ENCODE measurements at regions of chr1 and their contacts with region 1.

Region 1: DNA sequence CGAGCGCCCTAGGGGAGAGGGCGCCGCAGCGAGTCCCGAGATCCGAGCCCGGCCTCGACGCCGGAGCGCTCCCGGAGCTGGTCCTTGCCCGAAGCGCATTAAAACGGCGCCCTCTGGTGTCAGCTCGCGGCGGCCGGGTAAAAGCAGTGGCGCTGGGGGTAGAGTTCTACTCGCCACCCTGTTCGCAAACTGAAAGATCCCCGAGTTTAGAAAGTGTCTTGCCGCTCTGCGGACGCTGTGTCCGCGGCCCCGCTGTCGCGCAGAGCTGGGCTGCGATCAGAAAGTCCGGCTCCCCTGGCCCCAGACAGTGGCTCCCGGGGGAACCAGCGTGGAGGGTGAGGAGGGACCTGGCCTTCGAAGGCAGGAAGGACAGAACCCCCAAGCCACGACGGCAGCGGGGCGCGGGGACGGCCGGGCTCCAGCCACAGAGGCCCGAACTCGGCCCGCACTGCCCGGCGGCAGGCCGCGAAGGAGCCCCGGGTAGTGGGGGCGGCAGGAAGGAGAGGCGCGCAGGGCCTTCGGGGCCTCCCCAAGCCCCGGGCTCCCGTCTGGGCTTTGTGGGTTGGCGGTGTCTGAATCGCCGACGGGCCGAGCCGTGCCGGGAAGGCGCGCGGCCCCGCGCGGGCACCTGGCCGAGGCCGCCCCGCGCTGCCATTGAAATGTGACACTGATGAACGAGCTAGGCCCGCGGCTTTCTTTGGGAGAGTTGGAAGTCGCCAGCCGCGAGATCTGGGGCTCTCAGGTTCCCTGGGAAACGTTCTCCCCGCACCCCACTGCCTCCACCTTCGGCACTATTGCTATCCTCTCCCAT is 39.1 kb upstream of the NFIA start:
- DNase-seq: peak in 1 of 2 experiments; percentile 99
- H3K4me3 ChIP-seq: peak overlapping the region; percentile 33 to 66 (median 40)
- H3K27ac ChIP-seq: no peak overlapping the region
- H3K4me1 ChIP-seq: peaks cover 0 to 5% (median 2%) of the 10 kb centered on the region in 4 experiments; a peak in 5 of 7 replicates
- H3K27me3 ChIP-seq: peaks cover 0 to 24% (median 19%) of the 10 kb centered on the region in 4 experiments; a peak in 6 of 7 replicates
- CTCF ChIP-seq: peak; percentile 83 to 94 (median 90)
- EP300 ChIP-seq: no peak
- POLR2A ChIP-seq: peak in 1 of 2 experiments; percentile 39; a peak in 1 of 3 replicates
- RAD21 ChIP-seq: peak; percentile 92 to 94

Region 2: GRCh38 chr1:60281360-60281932 is 761.8 kb before region 1 on chr1:
- CTCF ChIA-PET with region 1: interaction called, 11 read pairs
- POLR2A ChIA-PET with region 1: no interaction called
- DNase-seq: peak; percentile 59 to 61
- H3K4me3 ChIP-seq: no peak overlapping the region
- H3K27ac ChIP-seq: no peak overlapping the region
- H3K4me1 ChIP-seq: peaks cover 0 to 5% (median 0%) of the 10 kb centered on the region in 4 experiments; a peak in 2 of 7 replicates
- H3K27me3 ChIP-seq: no peaks in the 10 kb centered on the region
- CTCF ChIP-seq: peak; percentile 78 to 95 (median 82)
- EP300 ChIP-seq: no peak
- POLR2A ChIP-seq: no peak
- RAD21 ChIP-seq: peak; percentile 97 to 98

Region 3: DNA sequence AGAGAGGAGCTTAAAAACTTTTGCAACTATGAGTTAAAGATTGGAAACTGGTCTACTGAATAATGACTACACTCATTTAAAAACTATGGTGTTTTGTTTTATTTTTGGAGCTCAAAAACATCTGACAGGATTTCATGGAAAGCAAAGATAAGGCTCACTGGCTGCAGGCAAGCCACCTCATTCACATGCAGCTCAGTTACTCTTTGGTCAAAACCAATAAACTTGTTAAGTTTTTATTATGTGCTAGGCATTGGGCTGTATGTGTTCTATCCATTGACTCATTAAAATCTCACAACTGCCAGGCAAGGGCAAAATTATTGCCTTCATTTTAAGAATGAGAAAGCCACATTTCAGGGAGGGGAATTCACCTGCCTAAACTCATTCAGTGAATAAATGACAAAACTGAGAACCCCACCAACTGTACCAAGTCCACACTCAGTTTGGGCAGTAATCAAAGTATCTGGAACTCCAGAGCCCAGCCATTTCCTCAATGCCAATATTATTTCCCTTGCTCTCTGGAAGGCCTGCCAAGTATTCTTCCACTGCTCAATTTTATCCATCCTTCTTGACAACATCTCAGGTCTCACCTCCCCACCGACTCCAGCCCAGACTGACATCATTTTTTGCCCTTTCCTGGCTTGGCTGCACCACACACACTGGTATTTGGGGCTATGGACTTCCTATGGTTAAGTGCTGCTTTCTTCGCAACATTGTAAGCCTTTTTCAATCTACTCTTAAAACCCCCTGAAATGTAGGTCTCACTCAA is 361.9 kb before region 1 on chr1:
- CTCF ChIA-PET with region 1: no interaction called
- POLR2A ChIA-PET with region 1: no interaction called
- DNase-seq: no peak
- H3K4me3 ChIP-seq: no peak overlapping the region
- H3K27ac ChIP-seq: no peak overlapping the region
- H3K4me1 ChIP-seq: peaks cover 0 to 1% (median 0%) of the 10 kb centered on the region in 4 experiments; a peak in 2 of 7 replicates
- H3K27me3 ChIP-seq: no peaks in the 10 kb centered on the region
- CTCF ChIP-seq: no peak
- EP300 ChIP-seq: no peak
- POLR2A ChIP-seq: no peak
- RAD21 ChIP-seq: no peak

Region 4: DNA sequence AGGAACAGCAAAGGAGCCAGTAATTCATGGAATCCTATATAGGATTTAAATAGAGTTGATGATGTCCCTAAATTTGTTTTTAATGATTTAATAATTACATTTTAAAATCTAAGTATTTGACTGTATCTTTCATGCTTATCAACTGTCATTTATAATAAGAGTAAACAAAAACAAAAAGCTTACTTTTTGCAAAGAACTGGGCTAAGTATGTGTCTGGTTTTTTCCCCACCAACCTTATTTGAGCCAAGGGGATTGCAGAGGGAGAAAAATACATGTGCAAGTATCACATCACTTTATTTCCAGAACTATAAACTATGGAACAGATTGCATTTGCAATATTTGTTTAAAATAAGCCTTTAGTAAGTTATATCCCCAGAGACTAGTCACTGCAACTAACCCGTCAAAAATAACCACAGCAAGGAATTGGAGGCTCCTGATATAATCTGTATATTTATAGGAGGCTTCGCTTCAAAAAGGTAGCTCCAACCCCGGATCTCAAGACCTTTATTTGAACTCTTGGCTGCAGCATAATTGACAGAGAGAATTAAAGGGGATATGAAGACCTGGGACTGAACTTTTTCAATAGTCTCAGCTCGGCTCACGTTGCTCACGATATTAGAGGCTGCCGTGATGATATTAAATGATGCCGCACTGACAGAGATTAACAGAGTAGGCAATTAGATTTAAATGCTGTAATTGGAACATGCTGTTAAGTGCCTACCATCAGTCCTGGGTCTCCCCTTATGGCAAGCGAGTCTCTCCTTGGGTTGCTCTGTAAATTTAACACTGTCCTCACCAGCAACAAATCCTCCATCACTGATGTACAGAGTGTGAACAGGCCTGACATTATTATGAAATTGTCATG is 289.9 kb before region 1 on chr1:
- CTCF ChIA-PET with region 1: no interaction called
- POLR2A ChIA-PET with region 1: no interaction called
- DNase-seq: no peak
- H3K4me3 ChIP-seq: no peak overlapping the region
- H3K27ac ChIP-seq: no peak overlapping the region
- H3K4me1 ChIP-seq: no peaks in the 10 kb centered on the region
- H3K27me3 ChIP-seq: no peaks in the 10 kb centered on the region
- CTCF ChIP-seq: no peak
- EP300 ChIP-seq: no peak
- POLR2A ChIP-seq: no peak
- RAD21 ChIP-seq: no peak

Region 5: GRCh38 chr1:60848583-60849188 is 194.5 kb before region 1 on chr1:
- CTCF ChIA-PET with region 1: interaction called, 42 read pairs
- POLR2A ChIA-PET with region 1: interaction called, 14 read pairs
- DNase-seq: peak; percentile 1 to 59
- H3K4me3 ChIP-seq: peak overlapping the region in 1 of 4 experiments; percentile 28; a peak in 1 of 8 replicates
- H3K27ac ChIP-seq: no peak overlapping the region
- H3K4me1 ChIP-seq: peaks cover 0 to 5% (median 2%) of the 10 kb centered on the region in 4 experiments; a peak in 5 of 7 replicates
- H3K27me3 ChIP-seq: no peaks in the 10 kb centered on the region
- CTCF ChIP-seq: peak in 2 of 3 experiments; percentile 49 to 53; a peak in 2 of 4 replicates
- EP300 ChIP-seq: no peak
- POLR2A ChIP-seq: no peak
- RAD21 ChIP-seq: peak; percentile 74 to 82

Region 6: DNA sequence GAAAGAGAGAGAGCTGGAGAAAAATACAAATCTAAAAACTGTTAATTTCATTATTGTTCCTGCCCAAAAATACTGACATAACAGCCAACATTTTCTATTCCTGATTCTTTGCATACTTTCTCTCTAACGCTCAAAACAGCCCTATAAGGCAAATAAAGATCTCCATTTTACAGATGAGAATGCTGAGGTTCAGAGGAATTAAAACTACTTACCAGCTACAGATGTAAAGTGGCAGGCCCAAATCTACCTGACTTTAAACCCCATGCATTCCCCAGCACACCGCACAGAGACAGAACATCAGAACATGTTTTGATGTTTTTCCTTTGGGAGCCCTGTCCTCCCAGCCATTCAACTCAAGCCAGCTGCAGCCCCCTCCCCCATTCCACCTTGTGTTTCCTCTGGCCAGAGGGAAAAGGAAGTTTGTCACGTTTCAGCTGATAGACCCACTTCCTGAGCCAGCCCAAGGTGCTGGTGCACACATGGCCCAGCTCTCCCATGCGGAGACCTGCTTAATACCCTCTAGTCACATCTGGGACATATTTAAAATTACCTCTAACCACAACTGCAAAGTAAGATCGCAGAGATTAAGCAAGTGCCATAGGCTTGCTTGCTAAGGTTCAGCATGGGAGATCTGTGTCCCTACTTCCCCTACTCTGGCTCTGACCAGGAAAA is 93.9 kb before region 1 on chr1:
- CTCF ChIA-PET with region 1: interaction called, 11 read pairs
- POLR2A ChIA-PET with region 1: no interaction called
- DNase-seq: no peak
- H3K4me3 ChIP-seq: no peak overlapping the region
- H3K27ac ChIP-seq: no peak overlapping the region
- H3K4me1 ChIP-seq: peaks cover 0 to 7% (median 2%) of the 10 kb centered on the region in 4 experiments; a peak in 2 of 7 replicates
- H3K27me3 ChIP-seq: no peaks in the 10 kb centered on the region
- CTCF ChIP-seq: no peak
- EP300 ChIP-seq: no peak
- POLR2A ChIP-seq: no peak
- RAD21 ChIP-seq: no peak

Region 7: GRCh38 chr1:60972841-60973364 is 70.3 kb before region 1 on chr1:
- CTCF ChIA-PET with region 1: interaction called, 29 read pairs
- POLR2A ChIA-PET with region 1: interaction called, 3 read pairs
- DNase-seq: no peak
- H3K4me3 ChIP-seq: no peak overlapping the region
- H3K27ac ChIP-seq: no peak overlapping the region
- H3K4me1 ChIP-seq: peaks cover 0 to 12% (median 8%) of the 10 kb centered on the region in 4 experiments; a peak in 3 of 7 replicates
- H3K27me3 ChIP-seq: peaks cover 0 to 5% (median 0%) of the 10 kb centered on the region in 4 experiments; a peak in 2 of 7 replicates
- CTCF ChIP-seq: no peak
- EP300 ChIP-seq: no peak
- POLR2A ChIP-seq: no peak
- RAD21 ChIP-seq: no peak

Region 8: DNA sequence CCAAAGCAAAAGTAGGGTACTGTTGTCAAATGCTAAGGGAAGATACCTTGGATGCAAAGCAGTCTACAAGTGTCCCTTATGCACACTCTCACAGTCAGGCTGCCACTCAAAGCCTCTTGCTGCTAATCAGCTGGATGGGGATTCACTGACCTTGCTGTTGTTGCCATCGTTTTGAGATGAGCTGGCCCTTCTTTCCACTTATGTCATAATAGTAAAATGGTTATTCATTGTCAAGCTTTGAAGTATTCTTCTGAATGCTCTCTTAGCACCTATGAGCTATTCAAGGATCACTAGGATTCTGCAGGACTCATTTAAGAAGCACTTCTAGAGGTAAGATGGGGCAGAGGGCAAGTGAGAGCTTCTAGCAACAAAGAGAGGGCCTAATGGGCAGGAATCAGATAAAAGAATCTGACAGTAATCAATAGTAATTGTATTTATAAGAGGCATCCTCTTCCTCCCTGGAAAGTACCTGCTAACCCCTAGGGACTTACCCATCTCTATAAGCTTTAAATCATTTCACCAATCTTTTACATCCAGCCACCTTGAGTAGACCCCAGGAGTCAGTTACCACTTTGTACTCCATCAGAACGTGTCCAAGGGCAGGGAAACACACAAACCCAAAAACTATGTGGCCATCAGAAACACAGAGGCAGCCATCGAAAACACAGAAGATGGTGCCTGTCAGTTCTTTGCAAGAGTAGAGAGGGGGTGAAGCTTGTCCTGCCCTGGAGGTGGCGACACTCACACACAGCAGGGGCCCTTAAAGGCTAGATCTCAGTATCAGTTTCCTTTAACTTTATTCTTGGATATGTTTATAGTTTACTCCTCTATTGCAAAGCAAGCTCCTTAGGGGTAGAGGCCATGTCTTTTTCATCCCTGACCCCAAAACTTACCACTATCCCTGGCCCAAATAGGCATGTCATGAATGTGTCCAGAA is 64.5 kb before region 1 on chr1:
- CTCF ChIA-PET with region 1: interaction called, 30 read pairs
- POLR2A ChIA-PET with region 1: interaction called, 3 read pairs
- DNase-seq: peak in 1 of 2 experiments; percentile 55
- H3K4me3 ChIP-seq: no peak overlapping the region
- H3K27ac ChIP-seq: no peak overlapping the region
- H3K4me1 ChIP-seq: peaks cover 0 to 4% (median 2%) of the 10 kb centered on the region in 4 experiments; a peak in 1 of 7 replicates
- H3K27me3 ChIP-seq: no peaks in the 10 kb centered on the region
- CTCF ChIP-seq: peak; percentile 64 to 75 (median 69)
- EP300 ChIP-seq: no peak
- POLR2A ChIP-seq: no peak
- RAD21 ChIP-seq: peak; percentile 71 to 74

Region 9: DNA sequence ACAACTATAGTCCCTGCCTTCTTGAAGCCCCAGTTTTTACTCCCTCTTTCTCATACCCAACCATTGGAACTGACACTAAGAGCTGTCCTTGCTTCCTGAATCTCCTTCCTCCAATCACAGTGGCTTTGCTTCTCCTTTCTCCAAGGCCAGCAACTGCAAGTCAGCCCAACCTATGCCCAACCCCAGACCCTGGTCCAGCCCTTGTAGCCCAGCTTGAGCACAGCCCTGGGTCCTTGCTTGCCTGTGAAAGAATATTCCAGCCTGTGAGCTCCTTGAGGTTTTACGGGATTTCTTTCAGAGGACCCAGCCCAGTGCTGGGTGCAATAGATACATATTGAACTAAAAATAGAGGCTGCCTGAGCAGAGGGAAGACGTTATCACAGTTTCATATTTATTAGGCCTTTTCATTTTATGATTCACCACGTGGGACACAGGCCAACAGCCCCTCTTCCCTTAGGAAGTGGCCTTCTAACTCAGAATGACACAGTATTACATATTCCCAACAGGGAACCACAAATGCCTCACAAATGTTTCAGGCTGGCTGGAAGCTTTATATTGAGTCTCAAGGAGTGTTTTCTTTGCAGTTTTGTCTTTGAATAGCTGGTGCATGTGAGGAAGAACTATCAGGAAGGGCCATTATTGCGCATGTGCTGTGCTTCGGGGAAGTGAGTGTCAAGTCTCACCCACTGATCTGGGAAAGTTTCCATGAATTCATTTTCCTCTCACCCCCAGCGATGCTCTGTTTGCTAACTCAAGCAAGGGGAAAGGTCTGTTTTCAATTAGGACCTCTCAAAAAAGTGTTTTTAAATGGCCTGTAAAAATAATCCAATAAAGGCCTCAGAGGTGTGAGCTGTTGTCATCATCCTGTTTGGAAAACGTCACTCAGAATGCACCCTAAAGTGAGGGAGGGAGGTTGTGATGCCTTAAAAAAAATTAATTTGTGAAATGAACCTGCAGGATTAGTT is 53.2 kb before region 1 on chr1:
- CTCF ChIA-PET with region 1: interaction called, 30 read pairs
- POLR2A ChIA-PET with region 1: no interaction called
- DNase-seq: no peak
- H3K4me3 ChIP-seq: no peak overlapping the region
- H3K27ac ChIP-seq: no peak overlapping the region
- H3K4me1 ChIP-seq: peaks cover 0 to 3% (median 0%) of the 10 kb centered on the region in 4 experiments; a peak in 1 of 7 replicates
- H3K27me3 ChIP-seq: no peaks in the 10 kb centered on the region
- CTCF ChIP-seq: no peak
- EP300 ChIP-seq: no peak
- POLR2A ChIP-seq: no peak
- RAD21 ChIP-seq: no peak

Region 10: DNA sequence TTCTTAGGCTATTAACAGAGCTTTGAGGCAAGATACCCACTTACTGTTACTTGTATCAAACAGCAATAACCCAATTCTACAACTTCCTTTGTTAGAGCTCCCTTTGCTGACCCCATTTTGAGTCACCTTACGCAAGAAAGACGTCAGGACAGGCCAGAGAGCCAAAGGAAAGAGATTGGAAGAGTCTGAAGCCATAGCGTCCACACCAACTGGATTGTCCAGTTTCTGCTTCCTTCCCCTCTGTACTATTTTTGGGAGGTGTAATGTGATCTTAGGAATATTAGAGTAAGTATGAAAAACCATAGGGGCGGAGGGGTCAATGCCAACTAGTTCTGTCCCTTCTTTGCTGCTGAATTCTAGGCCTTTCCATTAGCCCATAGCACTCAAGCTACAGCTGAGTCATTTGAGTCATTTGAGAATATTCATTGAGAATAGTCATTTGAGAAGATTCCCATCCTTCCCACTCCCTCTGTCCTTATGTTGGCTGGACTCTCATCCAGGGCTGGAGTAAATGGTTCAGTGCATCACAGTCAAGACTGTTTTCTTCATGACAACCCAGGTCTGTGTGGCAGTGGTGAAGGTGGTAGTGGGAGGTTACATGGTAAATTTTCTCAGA is 24.3 kb after region 1 on chr1:
- CTCF ChIA-PET with region 1: no interaction called
- POLR2A ChIA-PET with region 1: no interaction called
- DNase-seq: no peak
- H3K4me3 ChIP-seq: no peak overlapping the region
- H3K27ac ChIP-seq: no peak overlapping the region
- H3K4me1 ChIP-seq: no peaks in the 10 kb centered on the region
- H3K27me3 ChIP-seq: peaks cover 0 to 3% (median 2%) of the 10 kb centered on the region in 4 experiments; a peak in 3 of 7 replicates
- CTCF ChIP-seq: no peak
- EP300 ChIP-seq: no peak
- POLR2A ChIP-seq: no peak
- RAD21 ChIP-seq: no peak

Region 11: DNA sequence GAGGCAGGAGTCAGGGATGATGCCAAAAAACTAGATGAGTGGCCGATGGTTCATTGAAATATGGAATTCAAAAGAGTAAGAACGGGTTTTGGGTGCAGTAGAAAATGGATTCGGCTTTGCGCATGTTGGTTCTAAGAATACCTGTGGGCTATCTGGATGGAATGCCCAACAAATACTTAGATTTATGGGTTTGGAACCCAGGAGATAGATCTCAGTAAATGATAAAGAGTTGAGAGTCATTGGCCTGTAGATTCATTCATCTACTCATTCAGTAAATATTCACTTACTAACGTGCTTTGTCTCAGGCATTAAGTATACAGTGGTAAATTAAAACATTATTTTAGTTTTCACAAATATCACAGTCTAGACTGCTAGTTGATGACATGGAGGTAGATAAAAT is 286.8 kb after region 1 on chr1:
- CTCF ChIA-PET with region 1: no interaction called
- POLR2A ChIA-PET with region 1: no interaction called
- DNase-seq: no peak
- H3K4me3 ChIP-seq: no peak overlapping the region
- H3K27ac ChIP-seq: no peak overlapping the region
- H3K4me1 ChIP-seq: peaks cover 0 to 2% (median 0%) of the 10 kb centered on the region in 4 experiments; a peak in 1 of 7 replicates
- H3K27me3 ChIP-seq: no peaks in the 10 kb centered on the region
- CTCF ChIP-seq: no peak
- EP300 ChIP-seq: no peak
- POLR2A ChIP-seq: no peak
- RAD21 ChIP-seq: no peak